OCI-LY7 (cell line): ENCODE measurements at regions of chr2 and their contacts with region 1.

Region 1: DNA sequence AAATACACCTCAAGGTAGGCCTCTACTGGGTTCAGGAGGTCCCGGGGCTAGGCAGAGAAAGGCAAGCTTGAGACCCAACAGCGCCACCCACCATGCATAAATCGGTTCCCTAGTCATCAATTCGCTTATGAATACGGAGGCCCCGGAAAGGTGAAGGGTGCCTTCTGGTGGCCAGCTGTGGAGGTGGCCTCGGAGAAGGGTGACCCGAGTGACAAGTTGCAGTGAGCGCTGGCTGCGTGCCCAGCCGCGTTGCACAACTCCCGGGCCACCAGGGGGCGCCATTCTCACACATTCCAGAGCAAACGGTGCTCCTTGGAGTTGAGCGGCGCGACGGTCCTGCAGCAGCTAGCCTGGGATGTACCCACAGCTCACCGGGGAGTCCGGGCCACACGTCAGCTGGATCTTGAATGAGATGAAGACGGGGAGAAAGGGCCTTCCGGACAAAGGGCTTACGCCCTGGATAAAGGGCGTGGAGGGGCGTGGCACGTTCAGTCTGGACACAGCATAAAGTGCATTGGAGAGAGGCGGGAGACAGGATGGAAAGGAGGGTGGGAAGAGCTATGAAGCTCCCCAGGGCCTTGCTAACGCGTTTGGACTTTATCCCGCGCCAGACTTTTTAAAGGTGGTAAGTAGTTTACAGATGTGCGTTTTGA is 20.4 kb downstream of the TMSB10 start:
- DNase-seq: peak; percentile 97
- H3K4me3 ChIP-seq: peak overlapping the region; percentile 74
- H3K27ac ChIP-seq: peak overlapping the region; percentile 80
- H3K4me1 ChIP-seq: peaks cover 33% of the 10 kb centered on the region
- CTCF ChIP-seq: peak; percentile 99

Region 2: GRCh38 chr2:84495539-84496146 is 430.2 kb before region 1 on chr2:
- CTCF ChIA-PET with region 1: no interaction called
- POLR2A ChIA-PET with region 1: no interaction called
- intact Hi-C with region 1: loop called (anchors 1 kb)
- DNase-seq: peak; percentile 69
- H3K4me3 ChIP-seq: no peak overlapping the region
- H3K27ac ChIP-seq: no peak overlapping the region
- H3K4me1 ChIP-seq: no peaks in the 10 kb centered on the region
- CTCF ChIP-seq: peak; percentile 87

Region 3: DNA sequence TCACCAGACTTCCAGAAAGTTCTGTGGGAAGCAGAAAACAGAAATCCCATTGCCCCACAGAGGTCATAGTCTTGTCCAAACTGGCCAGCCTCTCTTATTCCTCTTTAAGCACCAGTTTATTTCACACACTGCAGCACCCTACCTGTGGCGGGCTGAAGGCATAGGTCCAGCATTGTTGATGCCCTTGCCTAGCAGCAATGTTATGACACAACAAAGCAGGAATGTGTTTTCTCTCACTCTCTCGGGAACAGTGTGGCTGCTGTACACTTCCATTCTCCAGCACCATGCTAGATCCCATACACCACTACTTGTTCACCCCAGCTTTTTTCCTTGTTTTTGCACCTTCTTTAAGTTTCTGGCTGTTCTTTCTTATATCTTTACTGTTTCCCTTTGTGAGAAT is 228.0 kb before region 1 on chr2:
- CTCF ChIA-PET with region 1: no interaction called
- POLR2A ChIA-PET with region 1: no interaction called
- intact Hi-C with region 1: no loop called
- DNase-seq: no peak
- H3K4me3 ChIP-seq: no peak overlapping the region
- H3K27ac ChIP-seq: no peak overlapping the region
- H3K4me1 ChIP-seq: no peaks in the 10 kb centered on the region
- CTCF ChIP-seq: no peak

Region 4: GRCh38 chr2:84905181-84906107 is 20.4 kb before region 1 on chr2 and contains the start of gene TMSB10:
- CTCF ChIA-PET with region 1: interaction called, 12 read pairs
- POLR2A ChIA-PET with region 1: interaction called, 41 read pairs
- intact Hi-C with region 1: loop called (anchors 1 kb)
- DNase-seq: peak; percentile 86
- H3K4me3 ChIP-seq: peak within 1 kb of the TSS; percentile 95
- H3K27ac ChIP-seq: peak within 1 kb of the TSS; percentile 51
- H3K4me1 ChIP-seq: peaks cover 15% of the 10 kb centered on the region
- CTCF ChIP-seq: peak; percentile 59
- total RNA-seq, gene TMSB10: 1,901 and 3,039 TPM in 2 replicates

Region 5: DNA sequence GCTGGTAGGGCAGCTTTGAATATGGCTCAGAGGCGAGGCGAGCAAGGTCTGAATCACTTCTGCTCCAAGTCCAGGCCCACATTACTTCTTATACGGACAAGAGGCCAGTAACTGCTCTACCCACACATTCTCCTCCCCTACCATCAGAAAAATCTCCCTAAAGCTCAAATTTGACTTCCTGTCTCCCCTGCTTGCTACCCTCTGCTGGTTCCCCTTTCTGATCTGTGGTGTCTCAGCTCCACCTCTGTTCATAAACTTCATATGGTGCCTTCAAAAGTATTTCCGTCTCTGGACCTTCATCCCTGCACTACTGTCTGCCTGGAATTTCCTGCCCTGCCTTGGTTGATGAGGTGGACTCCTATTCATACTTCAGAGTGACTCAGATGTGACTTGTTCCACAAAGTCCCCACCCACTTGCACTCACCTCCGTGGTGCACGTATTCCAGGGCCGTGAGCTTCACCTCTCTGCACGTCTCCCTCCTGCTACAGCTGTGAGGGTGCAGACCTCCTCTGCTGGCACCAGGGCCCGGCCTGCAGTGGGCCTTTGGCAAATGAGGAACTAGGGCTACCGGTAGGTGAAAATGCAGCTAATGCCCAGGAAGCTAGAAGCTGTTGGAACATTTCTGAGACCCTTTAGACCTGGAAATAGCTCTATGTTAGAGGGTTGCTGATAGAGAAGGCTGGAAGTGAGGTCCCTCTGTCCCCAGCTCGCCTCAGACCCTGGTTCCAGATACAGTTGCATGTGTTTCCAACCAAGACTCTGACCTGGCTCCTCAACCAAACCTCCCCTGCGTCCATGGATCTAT is 20.6 kb after region 1 on chr2:
- CTCF ChIA-PET with region 1: interaction called, 30 read pairs
- POLR2A ChIA-PET with region 1: interaction called, 22 read pairs
- intact Hi-C with region 1: loop called (anchors 1 kb)
- DNase-seq: peak; percentile 70
- H3K4me3 ChIP-seq: peak overlapping the region; percentile 42
- H3K27ac ChIP-seq: peak overlapping the region; percentile 75
- H3K4me1 ChIP-seq: peaks cover 41% of the 10 kb centered on the region
- CTCF ChIP-seq: peak; percentile 54

Region 6: GRCh38 chr2:85017411-85018048 is 91.7 kb after region 1 on chr2:
- CTCF ChIA-PET with region 1: interaction called, 13 read pairs
- POLR2A ChIA-PET with region 1: interaction called, 3 read pairs
- intact Hi-C with region 1: loop called (anchors 1 kb)
- DNase-seq: peak; percentile 9
- H3K4me3 ChIP-seq: no peak overlapping the region
- H3K27ac ChIP-seq: no peak overlapping the region
- H3K4me1 ChIP-seq: peaks cover 18% of the 10 kb centered on the region
- CTCF ChIP-seq: peak; percentile 84

Region 7: GRCh38 chr2:85302121-85302520 is 376.3 kb after region 1 on chr2:
- CTCF ChIA-PET with region 1: no interaction called
- POLR2A ChIA-PET with region 1: no interaction called
- intact Hi-C with region 1: loop called (anchors 5 kb)
- DNase-seq: no peak
- H3K4me3 ChIP-seq: no peak overlapping the region
- H3K27ac ChIP-seq: no peak overlapping the region
- H3K4me1 ChIP-seq: no peaks in the 10 kb centered on the region
- CTCF ChIP-seq: no peak

Region 8: DNA sequence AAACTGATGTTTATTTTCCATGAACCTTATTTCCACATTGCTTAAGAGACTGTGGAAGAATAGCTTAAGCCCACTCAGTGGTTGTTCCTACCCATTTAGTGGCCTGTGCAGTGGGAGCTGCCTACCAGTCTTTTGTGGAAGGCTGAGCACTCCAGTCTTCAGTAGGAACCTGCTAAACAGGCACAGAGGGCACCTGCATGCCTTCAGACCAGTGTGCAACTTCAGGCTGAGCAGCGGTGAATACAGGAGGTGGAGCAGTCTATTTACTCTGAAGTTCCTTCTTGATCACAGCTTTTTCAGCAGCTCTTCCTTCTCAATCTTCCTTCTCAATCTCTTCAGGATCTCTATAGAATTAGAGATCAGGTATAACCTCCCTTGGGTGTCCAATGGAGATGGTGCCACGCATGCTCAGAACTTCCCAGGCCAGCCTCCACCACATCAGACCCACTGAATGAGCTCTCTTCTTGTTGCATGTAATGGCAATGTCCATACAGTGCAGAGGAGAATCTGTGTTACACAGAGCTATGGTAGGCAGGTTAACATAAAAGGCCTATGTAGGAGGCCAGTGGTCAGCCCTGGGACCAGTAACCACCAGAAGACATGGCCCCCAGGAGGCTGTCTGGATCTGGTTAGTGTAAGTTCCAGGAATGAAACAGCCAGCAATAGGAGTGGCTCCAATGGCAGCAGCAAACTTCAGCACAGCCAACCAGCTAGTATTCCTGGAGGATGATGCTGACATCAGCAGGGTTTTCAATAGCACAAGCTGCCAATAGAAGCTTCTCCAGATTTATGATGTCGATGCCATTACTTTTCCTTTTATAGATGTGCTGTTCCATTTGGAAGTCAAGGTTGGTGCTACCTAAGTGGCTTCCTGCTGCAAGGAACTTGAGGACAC is 565.3 kb after region 1 on chr2:
- CTCF ChIA-PET with region 1: no interaction called
- POLR2A ChIA-PET with region 1: no interaction called
- intact Hi-C with region 1: no loop called
- DNase-seq: no peak
- H3K4me3 ChIP-seq: no peak overlapping the region
- H3K27ac ChIP-seq: no peak overlapping the region
- H3K4me1 ChIP-seq: no peaks in the 10 kb centered on the region
- CTCF ChIP-seq: no peak